Naive thymus-derived CD4-positive, alpha-beta T cell (primary cell): ENCODE measurements at regions of chr6 and their contacts with region 1.

Region 1: GRCh38 chr6:119349323-119350042 is at the start of gene MAN1A1:
- DNase-seq: peak; percentile 79 to 96 (median 90)
- ATAC-seq: peak; percentile 94
- H3K4me3 ChIP-seq: peak within 1 kb of the TSS; percentile 85
- H3K4me3 Mint-ChIP-seq: peak within 1 kb of the TSS; percentile 82 to 99 (median 93)
- H3K27ac ChIP-seq: peak within 1 kb of the TSS; percentile 83
- H3K27ac Mint-ChIP-seq: peak within 1 kb of the TSS; percentile 77 to 96 (median 83)
- H3K4me1 ChIP-seq: peaks cover 9% of the 10 kb centered on the region in 2 donors
- H3K4me1 Mint-ChIP-seq: peaks cover 8 to 60% (median 53%) of the 10 kb centered on the region in 7 donors
- H3K27me3 ChIP-seq: no peaks in the 10 kb centered on the region
- H3K27me3 Mint-ChIP-seq: no peaks in the 10 kb centered on the region
- total RNA-seq, gene MAN1A1: 8.3 to 22.3 (median 8.5) TPM

Region 2: GRCh38 chr6:117674991-117675657 is 1674.4 kb before region 1 on chr6 and contains the start of gene NUS1:
- CTCF ChIA-PET with region 1: no interaction called
- POLR2A ChIA-PET with region 1: no interaction called
- intact Hi-C with region 1: loop called (anchors 1 to 5 kb)
- DNase-seq: peak; percentile 92 to 98 (median 96)
- ATAC-seq: peak; percentile 98
- H3K4me3 ChIP-seq: peak within 1 kb of the TSS; percentile 95
- H3K4me3 Mint-ChIP-seq: peak within 1 kb of the TSS; percentile 85 to 98 (median 94)
- H3K27ac ChIP-seq: peak within 1 kb of the TSS; percentile 74
- H3K27ac Mint-ChIP-seq: peak within 1 kb of the TSS; percentile 81 to 98 (median 91)
- H3K4me1 ChIP-seq: peaks cover 24 to 28% of the 10 kb centered on the region in 2 donors
- H3K4me1 Mint-ChIP-seq: peaks cover 37 to 57% (median 53%) of the 10 kb centered on the region in 7 donors
- H3K27me3 ChIP-seq: no peaks in the 10 kb centered on the region
- H3K27me3 Mint-ChIP-seq: peaks cover 0 to 2% (median 0%) of the 10 kb centered on the region in 5 donors
- total RNA-seq, gene NUS1: 19.6 to 37.6 (median 33.2) TPM

Region 3: GRCh38 chr6:118800394-118801071 is 549.0 kb before region 1 on chr6:
- CTCF ChIA-PET with region 1: no interaction called
- POLR2A ChIA-PET with region 1: no interaction called
- intact Hi-C with region 1: loop called in 1 of 2 experiments (anchors 10 kb)
- DNase-seq: peak; percentile 45 to 90 (median 86)
- ATAC-seq: peak; percentile 95
- H3K4me3 ChIP-seq: peak overlapping the region; percentile 22
- H3K4me3 Mint-ChIP-seq: peak overlapping the region; percentile 14 to 88 (median 68)
- H3K27ac ChIP-seq: no peak overlapping the region
- H3K27ac Mint-ChIP-seq: peak overlapping the region; percentile 73 to 93 (median 86)
- H3K4me1 ChIP-seq: peaks cover 17 to 25% of the 10 kb centered on the region in 2 donors
- H3K4me1 Mint-ChIP-seq: peaks cover 17 to 51% (median 37%) of the 10 kb centered on the region in 7 donors
- H3K27me3 ChIP-seq: no peaks in the 10 kb centered on the region
- H3K27me3 Mint-ChIP-seq: no peaks in the 10 kb centered on the region

Region 4: GRCh38 chr6:118825661-118826060 is 523.8 kb before region 1 on chr6:
- CTCF ChIA-PET with region 1: no interaction called
- POLR2A ChIA-PET with region 1: no interaction called
- intact Hi-C with region 1: no loop called
- DNase-seq: no peak
- ATAC-seq: no peak
- H3K4me3 ChIP-seq: no peak overlapping the region
- H3K4me3 Mint-ChIP-seq: no peak overlapping the region
- H3K27ac ChIP-seq: no peak overlapping the region
- H3K27ac Mint-ChIP-seq: no peak overlapping the region
- H3K4me1 ChIP-seq: no peaks in the 10 kb centered on the region
- H3K4me1 Mint-ChIP-seq: peaks cover 0 to 3% (median 0%) of the 10 kb centered on the region in 7 donors
- H3K27me3 ChIP-seq: no peaks in the 10 kb centered on the region
- H3K27me3 Mint-ChIP-seq: no peaks in the 10 kb centered on the region

Region 5: GRCh38 chr6:119078376-119079282 is 270.9 kb before region 1 on chr6 and contains the start of gene FAM184A:
- CTCF ChIA-PET with region 1: no interaction called
- POLR2A ChIA-PET with region 1: no interaction called
- intact Hi-C with region 1: loop called (anchors 2 kb)
- DNase-seq: peak; percentile 74 to 86 (median 82)
- ATAC-seq: peak; percentile 79
- H3K4me3 ChIP-seq: peak within 1 kb of the TSS; percentile 77
- H3K4me3 Mint-ChIP-seq: peak within 1 kb of the TSS; percentile 75 to 97 (median 94)
- H3K27ac ChIP-seq: peak within 1 kb of the TSS; percentile 74
- H3K27ac Mint-ChIP-seq: peak within 1 kb of the TSS; percentile 66 to 97 (median 95)
- H3K4me1 ChIP-seq: peaks cover 5 to 25% of the 10 kb centered on the region in 2 donors
- H3K4me1 Mint-ChIP-seq: peaks cover 14 to 50% (median 39%) of the 10 kb centered on the region in 7 donors
- H3K27me3 ChIP-seq: no peaks in the 10 kb centered on the region
- H3K27me3 Mint-ChIP-seq: peaks cover 0 to 9% (median 0%) of the 10 kb centered on the region in 5 donors
- total RNA-seq, gene FAM184A: 5.3 to 9.8 (median 7.9) TPM

Region 6: DNA sequence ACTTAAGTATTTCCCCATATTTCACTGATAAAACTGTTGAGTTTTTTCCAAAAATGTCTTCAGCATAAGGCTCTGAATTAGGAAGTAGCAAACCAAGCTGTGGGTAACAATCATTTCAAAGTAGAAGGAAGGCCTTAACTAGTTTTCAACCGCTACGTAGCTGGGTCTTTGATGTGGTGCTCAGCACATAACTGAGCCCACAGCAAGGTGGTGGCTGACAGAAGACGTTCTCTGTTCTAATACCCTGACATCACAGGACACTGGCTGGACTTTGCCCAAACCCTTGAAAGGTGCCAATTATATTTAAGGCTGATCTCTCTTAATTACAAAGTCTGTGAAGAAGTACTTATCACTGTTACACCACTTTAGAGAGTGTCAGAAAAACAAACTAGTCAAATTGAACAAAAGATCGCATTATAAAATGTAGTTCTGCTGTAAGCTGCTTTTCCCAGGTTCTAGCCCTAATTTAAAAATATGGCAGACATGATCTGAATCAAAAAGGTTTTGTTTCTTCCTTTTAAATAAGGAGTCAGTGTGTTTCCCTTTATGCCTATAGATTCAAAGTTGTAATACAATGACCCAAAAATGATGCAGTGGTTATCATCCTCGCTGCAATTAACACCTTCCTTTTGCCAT is 26.6 kb before region 1 on chr6:
- CTCF ChIA-PET with region 1: no interaction called
- POLR2A ChIA-PET with region 1: interaction called, 4 read pairs
- intact Hi-C with region 1: loop called in 1 of 2 experiments (anchors 1 kb)
- DNase-seq: peak in 7 of 9 donors; percentile 37 to 68 (median 53)
- ATAC-seq: peak; percentile 90
- H3K4me3 ChIP-seq: no peak overlapping the region
- H3K4me3 Mint-ChIP-seq: peak overlapping the region in 8 of 10 donors; percentile 3 to 70 (median 44)
- H3K27ac ChIP-seq: no peak overlapping the region
- H3K27ac Mint-ChIP-seq: peak overlapping the region in 7 of 9 donors; percentile 16 to 78 (median 31)
- H3K4me1 ChIP-seq: peaks cover 12 to 17% of the 10 kb centered on the region in 2 donors
- H3K4me1 Mint-ChIP-seq: peaks cover 16 to 37% (median 18%) of the 10 kb centered on the region in 7 donors
- H3K27me3 ChIP-seq: no peaks in the 10 kb centered on the region
- H3K27me3 Mint-ChIP-seq: no peaks in the 10 kb centered on the region

Region 7: GRCh38 chr6:119368951-119369350 is 19.5 kb after region 1 on chr6:
- CTCF ChIA-PET with region 1: no interaction called
- POLR2A ChIA-PET with region 1: no interaction called
- intact Hi-C with region 1: no loop called
- DNase-seq: no peak
- ATAC-seq: no peak
- H3K4me3 ChIP-seq: no peak overlapping the region
- H3K4me3 Mint-ChIP-seq: no peak overlapping the region
- H3K27ac ChIP-seq: no peak overlapping the region
- H3K27ac Mint-ChIP-seq: no peak overlapping the region
- H3K4me1 ChIP-seq: no peaks in the 10 kb centered on the region
- H3K4me1 Mint-ChIP-seq: peaks cover 0 to 1% (median 0%) of the 10 kb centered on the region in 7 donors
- H3K27me3 ChIP-seq: no peaks in the 10 kb centered on the region
- H3K27me3 Mint-ChIP-seq: no peaks in the 10 kb centered on the region

Region 8: GRCh38 chr6:119742188-119742803 is 392.8 kb after region 1 on chr6:
- CTCF ChIA-PET with region 1: no interaction called
- POLR2A ChIA-PET with region 1: no interaction called
- intact Hi-C with region 1: loop called in 1 of 2 experiments (anchors 2 kb)
- DNase-seq: peak; percentile 2 to 49 (median 22)
- ATAC-seq: peak; percentile 76
- H3K4me3 ChIP-seq: no peak overlapping the region
- H3K4me3 Mint-ChIP-seq: no peak overlapping the region
- H3K27ac ChIP-seq: no peak overlapping the region
- H3K27ac Mint-ChIP-seq: no peak overlapping the region
- H3K4me1 ChIP-seq: no peaks in the 10 kb centered on the region
- H3K4me1 Mint-ChIP-seq: peaks cover 0 to 6% (median 0%) of the 10 kb centered on the region in 7 donors
- H3K27me3 ChIP-seq: no peaks in the 10 kb centered on the region
- H3K27me3 Mint-ChIP-seq: peaks cover 0 to 27% (median 10%) of the 10 kb centered on the region in 5 donors

Region 9: GRCh38 chr6:121334299-121335086 is 1985.0 kb after region 1 on chr6 and contains the start of gene TBC1D32:
- CTCF ChIA-PET with region 1: no interaction called
- POLR2A ChIA-PET with region 1: no interaction called
- intact Hi-C with region 1: loop called (anchors 1 to 2 kb)
- DNase-seq: peak; percentile 84 to 90 (median 89)
- ATAC-seq: peak; percentile 92
- H3K4me3 ChIP-seq: peak within 1 kb of the TSS; percentile 74
- H3K4me3 Mint-ChIP-seq: peak within 1 kb of the TSS; percentile 86 to 99 (median 98)
- H3K27ac ChIP-seq: peak within 1 kb of the TSS; percentile 97
- H3K27ac Mint-ChIP-seq: peak within 1 kb of the TSS; percentile 97 to 100 (median 99)
- H3K4me1 ChIP-seq: peaks cover 4 to 8% of the 10 kb centered on the region in 2 donors
- H3K4me1 Mint-ChIP-seq: peaks cover 16 to 45% (median 35%) of the 10 kb centered on the region in 7 donors
- H3K27me3 ChIP-seq: no peaks in the 10 kb centered on the region
- H3K27me3 Mint-ChIP-seq: peaks cover 0 to 11% (median 0%) of the 10 kb centered on the region in 5 donors
- total RNA-seq, gene TBC1D32: 12.5 to 17.7 (median 15.8) TPM